Activated CD4-positive, alpha-beta T cell treated with anti-CD3 and anti-CD28 coated beads for 36 hours (primary cell): ENCODE measurements at regions of chr13 and their contacts with region 1.

Region 1: GRCh38 chr13:75537401-75538365 is at the start of gene COMMD6:
- DNase-seq: peak; percentile 89
- ATAC-seq: peak; percentile 96
- H3K4me3 Mint-ChIP-seq: peak within 1 kb of the TSS; percentile 100
- H3K27ac Mint-ChIP-seq: peak within 1 kb of the TSS; percentile 96
- H3K4me1 Mint-ChIP-seq: peaks cover 46% of the 10 kb centered on the region
- H3K27me3 Mint-ChIP-seq: no peaks in the 10 kb centered on the region
- total RNA-seq, gene COMMD6: 103 to 121 TPM

Region 2: DNA sequence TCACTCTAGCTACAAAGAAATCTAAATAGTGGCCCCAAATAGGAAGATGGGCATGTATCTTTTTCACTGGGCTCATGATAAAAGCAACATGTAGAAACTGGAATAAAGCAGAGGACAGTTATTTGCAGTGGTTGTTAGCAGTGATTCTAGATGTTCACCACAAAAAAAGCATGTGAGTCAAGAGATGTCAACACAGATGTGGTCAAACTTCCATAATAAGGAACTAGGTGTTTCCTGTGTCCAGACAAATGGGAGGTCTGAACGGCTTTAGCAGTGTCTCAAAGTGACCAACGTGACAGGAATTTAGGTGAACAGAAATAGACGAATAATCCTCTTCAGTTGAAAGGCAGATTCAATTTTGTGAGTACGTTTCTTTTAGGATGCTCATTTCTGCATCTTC is 218.4 kb before region 1 on chr13:
- CTCF ChIA-PET with region 1: no interaction called
- POLR2A ChIA-PET with region 1: no interaction called
- intact Hi-C with region 1: loop called in 1 of 2 experiments (anchors 2 kb)
- DNase-seq: no peak
- ATAC-seq: no peak
- H3K4me3 Mint-ChIP-seq: peak overlapping the region; percentile 10
- H3K27ac Mint-ChIP-seq: peak overlapping the region; percentile 95
- H3K4me1 Mint-ChIP-seq: peaks cover 69% of the 10 kb centered on the region
- H3K27me3 Mint-ChIP-seq: no peaks in the 10 kb centered on the region

Region 3: GRCh38 chr13:75549262-75550158 is 11.8 kb after region 1 on chr13 and contains the start of gene UCHL3:
- CTCF ChIA-PET with region 1: interaction called, 9 read pairs
- POLR2A ChIA-PET with region 1: interaction called, 3 read pairs
- intact Hi-C with region 1: loop called (anchors 1 kb)
- DNase-seq: peak; percentile 99
- ATAC-seq: peak; percentile 96
- H3K4me3 Mint-ChIP-seq: peak within 1 kb of the TSS; percentile 85
- H3K27ac Mint-ChIP-seq: peak within 1 kb of the TSS; percentile 95
- H3K4me1 Mint-ChIP-seq: peaks cover 41% of the 10 kb centered on the region
- H3K27me3 Mint-ChIP-seq: no peaks in the 10 kb centered on the region
- total RNA-seq, gene UCHL3: 42.2 to 45.3 TPM

Region 4: DNA sequence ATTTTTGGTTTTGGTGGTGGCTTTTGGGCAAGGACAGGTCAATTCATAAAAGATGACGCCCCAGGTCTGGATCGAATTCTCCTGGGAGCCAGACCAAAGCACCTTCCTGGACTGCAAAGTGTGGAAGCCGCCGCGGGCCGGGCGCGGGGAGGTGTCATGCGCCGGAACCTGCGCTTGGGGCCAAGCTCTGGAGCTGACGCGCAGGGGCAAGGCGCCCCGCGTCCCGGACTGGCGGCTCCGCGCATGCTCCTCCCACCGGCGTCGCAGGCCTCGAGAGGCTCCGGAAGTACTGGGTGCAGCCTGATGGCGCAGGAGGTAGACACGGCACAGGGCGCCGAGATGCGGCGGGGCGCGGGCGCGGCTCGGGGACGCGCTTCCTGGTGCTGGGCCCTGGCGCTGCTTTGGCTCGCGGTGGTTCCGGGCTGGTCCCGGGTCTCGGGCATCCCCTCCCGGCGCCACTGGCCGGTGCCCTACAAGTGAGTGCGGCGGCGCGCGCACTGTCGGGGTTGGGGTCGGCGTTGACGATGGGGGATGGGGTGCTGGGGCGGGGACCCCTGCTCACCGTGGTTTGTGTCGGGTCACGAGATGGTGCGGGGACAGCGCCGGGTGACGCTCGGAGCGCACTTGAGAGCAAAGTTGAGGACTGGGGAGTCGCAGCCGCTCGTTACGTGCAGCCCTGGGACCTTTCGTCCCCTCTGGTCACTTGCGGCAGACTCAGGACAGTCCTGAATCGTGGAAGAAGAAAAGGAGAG is 1454.3 kb after region 1 on chr13 and contains the start of gene CLN5:
- CTCF ChIA-PET with region 1: no interaction called
- POLR2A ChIA-PET with region 1: no interaction called
- intact Hi-C with region 1: loop called in 1 of 2 experiments (anchors 5 kb)
- DNase-seq: peak; percentile 97
- ATAC-seq: peak; percentile 93
- H3K4me3 Mint-ChIP-seq: peak within 1 kb of the TSS; percentile 97
- H3K27ac Mint-ChIP-seq: peak within 1 kb of the TSS; percentile 99
- H3K4me1 Mint-ChIP-seq: peaks cover 36% of the 10 kb centered on the region
- H3K27me3 Mint-ChIP-seq: peaks cover 3% of the 10 kb centered on the region
- total RNA-seq, gene CLN5: 14.5 to 14.9 TPM

Region 5: DNA sequence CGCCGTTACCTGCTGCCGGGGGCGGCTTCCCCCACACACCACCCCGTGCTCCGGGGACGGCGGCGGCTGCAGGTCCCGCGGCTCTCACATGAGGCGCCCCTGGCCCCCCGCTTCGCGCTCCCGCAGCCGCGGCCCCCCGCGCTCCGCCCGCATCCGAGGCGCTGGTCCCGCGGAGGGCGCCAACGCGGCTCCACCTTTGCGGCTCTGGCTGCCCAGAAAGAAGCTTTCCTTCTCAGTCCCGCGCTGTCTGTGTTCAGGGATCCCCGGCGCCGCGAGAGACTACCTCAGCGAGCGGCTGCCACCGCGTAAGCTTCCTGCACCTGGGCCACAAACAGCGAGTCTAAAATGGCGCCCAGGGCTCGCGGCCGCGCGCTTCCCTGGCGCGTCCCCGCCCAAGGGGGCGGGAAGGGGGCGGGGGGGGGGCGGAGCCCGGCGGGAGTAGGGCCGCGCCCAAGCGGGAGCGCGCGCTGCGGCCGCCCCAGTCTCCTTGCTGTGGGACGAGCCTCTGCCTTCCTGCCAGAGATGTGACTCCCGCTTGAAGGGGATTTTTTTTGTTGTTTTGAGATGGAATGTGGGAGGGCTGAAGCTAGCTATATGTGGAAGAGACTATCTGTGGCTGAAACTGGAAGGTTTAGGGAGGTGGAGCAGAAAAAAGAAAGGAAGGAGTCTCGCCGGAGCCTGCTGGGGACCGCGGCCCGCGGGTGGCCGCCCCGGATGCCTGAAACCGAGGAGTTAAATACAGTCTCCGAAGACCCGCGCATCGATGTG is 1489.3 kb after region 1 on chr13 and contains the start of gene FBXL3:
- CTCF ChIA-PET with region 1: no interaction called
- POLR2A ChIA-PET with region 1: no interaction called
- intact Hi-C with region 1: loop called in 1 of 2 experiments (anchors 2 kb)
- DNase-seq: peak; percentile 89
- ATAC-seq: peak; percentile 59
- H3K4me3 Mint-ChIP-seq: peak within 1 kb of the TSS; percentile 92
- H3K27ac Mint-ChIP-seq: peak within 1 kb of the TSS; percentile 96
- H3K4me1 Mint-ChIP-seq: peaks cover 47% of the 10 kb centered on the region
- H3K27me3 Mint-ChIP-seq: peaks cover 2% of the 10 kb centered on the region
- total RNA-seq, gene FBXL3: 28.4 to 31.6 TPM